ENCODE measurements at regions of chr22 and their contacts with region 1.

Region 1: DNA sequence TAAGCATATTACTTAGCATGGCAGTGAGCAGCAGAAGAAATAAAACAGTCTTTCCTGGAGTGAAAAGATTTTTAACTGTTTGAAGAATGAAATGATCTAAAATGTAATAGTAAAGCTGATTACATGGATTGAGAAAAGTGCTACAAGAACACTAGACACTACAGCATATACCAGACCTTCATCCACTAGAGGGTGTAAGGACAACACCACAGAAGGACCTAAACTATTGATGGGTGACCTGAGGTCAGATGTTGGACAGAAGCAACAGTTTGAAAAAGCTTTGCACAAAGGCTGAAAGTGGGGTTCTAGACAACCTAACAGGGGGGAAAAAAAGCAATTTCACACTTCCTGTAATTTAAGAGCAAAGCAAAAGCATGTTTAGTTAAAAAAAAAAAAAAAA is 97.7 kb downstream of the RBFOX2 start:
- DNase-seq: peak in 4 of 7 donors; percentile 33 to 43 (median 38)
- H3K4me3 ChIP-seq: no peak overlapping the region
- H3K27ac ChIP-seq: no peak overlapping the region
- H3K4me1 ChIP-seq: no peaks in the 10 kb centered on the region
- H3K27me3 ChIP-seq: no peaks in the 10 kb centered on the region
- CTCF ChIP-seq: peak; percentile 43 to 91 (median 80)
- POLR2A ChIP-seq: no peak

Region 2: DNA sequence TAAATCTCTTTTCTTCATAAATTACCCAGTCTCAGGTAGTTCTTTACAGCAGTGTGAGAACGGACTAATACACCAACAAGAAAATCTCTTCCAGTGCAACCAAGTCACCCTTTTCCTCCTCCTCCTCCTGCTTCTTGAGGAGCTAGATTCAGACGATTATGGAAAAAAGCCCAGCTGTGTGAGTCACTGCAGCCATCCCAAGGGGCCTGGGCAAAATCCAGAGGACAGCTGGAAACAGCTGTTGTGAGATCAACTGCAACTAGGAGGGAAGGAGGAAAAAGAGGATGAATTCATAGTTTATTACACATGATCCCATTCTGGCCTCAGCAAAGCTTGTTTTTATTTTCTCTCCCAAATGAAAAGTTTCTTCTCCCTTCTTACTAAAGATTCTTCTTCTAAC is 64.8 kb after region 1 on chr22:
- intact Hi-C with region 1: no loop called
- DNase-seq: peak; percentile 72 to 89 (median 81)
- H3K4me3 ChIP-seq: no peak overlapping the region
- H3K27ac ChIP-seq: peak overlapping the region in 4 of 5 donors; percentile 28 to 72 (median 45)
- H3K4me1 ChIP-seq: peaks cover 13 to 38% of the 10 kb centered on the region in 2 donors
- H3K27me3 ChIP-seq: no peaks in the 10 kb centered on the region
- CTCF ChIP-seq: no peak
- POLR2A ChIP-seq: no peak

Region 3: DNA sequence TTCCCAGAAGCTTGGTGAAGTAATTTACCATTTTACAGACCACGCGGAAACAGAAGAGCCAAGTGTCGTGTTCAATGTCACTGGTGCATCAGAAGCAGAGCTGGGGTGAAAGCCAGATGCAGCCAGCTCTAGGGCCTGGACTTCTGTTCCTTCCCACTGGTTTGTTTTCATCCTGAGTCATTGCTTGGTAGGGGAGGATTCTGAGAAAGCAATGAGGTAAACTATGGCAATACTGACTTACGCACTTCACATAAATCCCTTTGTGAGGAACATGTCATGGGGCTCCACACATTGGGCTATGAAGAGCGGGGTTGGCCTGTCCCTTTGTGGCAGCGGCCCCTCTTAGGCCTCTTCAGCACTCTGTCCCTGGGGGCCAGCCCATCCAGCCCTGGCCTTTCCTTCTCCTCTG is 150.1 kb after region 1 on chr22:
- intact Hi-C with region 1: no loop called
- DNase-seq: peak; percentile 26 to 78 (median 62)
- H3K4me3 ChIP-seq: no peak overlapping the region
- H3K27ac ChIP-seq: peak overlapping the region in 2 of 5 donors; percentile 65 to 80
- H3K4me1 ChIP-seq: no peaks in the 10 kb centered on the region
- H3K27me3 ChIP-seq: no peaks in the 10 kb centered on the region
- CTCF ChIP-seq: no peak
- POLR2A ChIP-seq: no peak

Region 4: GRCh38 chr22:36123673-36124630 is 193.0 kb after region 1 on chr22:
- intact Hi-C with region 1: loop called (anchors 5 to 10 kb)
- DNase-seq: peak; percentile 94 to 98 (median 96)
- H3K4me3 ChIP-seq: peak overlapping the region in 1 of 4 donors; percentile 19
- H3K27ac ChIP-seq: peak overlapping the region; percentile 33 to 93 (median 70)
- H3K4me1 ChIP-seq: peaks cover 0 to 4% of the 10 kb centered on the region in 2 donors
- H3K27me3 ChIP-seq: no peaks in the 10 kb centered on the region
- CTCF ChIP-seq: peak; percentile 98 to 99 (median 98)
- POLR2A ChIP-seq: peak in 1 of 2 donors; percentile 44